BJ (cell line): ENCODE measurements at regions of chr3 and their contacts with region 1.

Region 1: GRCh38 chr3:48400824-48401433 is 28.9 kb downstream of the FBXW12 start:
- DNase-seq: no peak
- H3K4me3 ChIP-seq: no peak overlapping the region
- H3K27me3 ChIP-seq: peaks cover 2% of the 10 kb centered on the region
- CTCF ChIP-seq: peak; percentile 77

Region 2: DNA sequence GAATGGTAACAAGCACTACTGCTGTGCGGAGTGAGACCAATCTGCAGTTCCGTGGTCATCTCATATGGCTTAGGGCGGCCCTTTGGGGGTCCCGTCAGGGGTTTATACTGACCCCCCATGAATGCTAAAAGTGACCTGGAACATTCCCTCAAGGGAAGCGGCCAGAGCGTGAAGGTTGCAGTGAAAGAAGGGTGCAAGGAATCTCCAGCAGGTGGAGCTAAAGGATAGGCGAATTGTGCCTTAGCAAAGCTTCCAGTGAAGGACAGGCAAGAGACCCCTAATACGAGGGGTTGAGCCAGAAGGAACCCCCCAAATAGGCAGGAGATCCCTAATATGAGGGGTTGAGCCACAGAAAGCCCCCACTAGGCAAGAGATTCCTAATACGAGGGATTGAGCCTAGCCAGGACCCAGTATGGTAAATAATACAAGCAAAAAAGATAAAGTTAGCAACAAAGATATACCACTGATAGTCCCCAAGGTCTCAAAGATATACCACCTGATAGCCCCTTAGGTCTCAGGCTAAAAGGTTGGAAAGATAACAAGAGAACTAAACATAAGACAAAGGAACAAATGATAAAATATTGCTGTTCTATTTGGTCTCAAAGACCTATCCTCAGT is 127.2 kb before region 1 on chr3:
- CTCF ChIA-PET with region 1: interaction called, 10 read pairs
- POLR2A ChIA-PET with region 1: no interaction called
- DNase-seq: no peak
- H3K4me3 ChIP-seq: no peak overlapping the region
- H3K27me3 ChIP-seq: no peaks in the 10 kb centered on the region
- CTCF ChIP-seq: peak; percentile 82

Region 3: DNA sequence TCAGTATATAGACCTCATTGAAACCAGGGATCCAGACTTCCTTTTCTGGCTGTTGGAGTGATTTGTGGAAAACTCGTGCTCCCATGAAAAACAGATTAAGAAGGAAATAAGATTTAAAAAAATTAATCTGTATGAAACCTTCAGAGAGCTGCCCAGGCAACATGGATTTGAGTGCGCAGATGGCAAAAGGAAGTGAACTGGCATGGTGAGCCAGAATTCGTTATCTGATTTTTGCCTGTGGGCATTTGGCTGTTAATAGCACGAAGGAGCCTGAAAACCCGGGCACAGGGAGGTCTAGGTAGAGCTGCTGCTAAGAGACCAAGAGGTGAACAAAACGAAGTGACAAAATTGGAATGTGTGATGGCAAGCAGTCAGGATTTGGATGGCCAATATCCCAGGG is 48.4 kb before region 1 on chr3:
- CTCF ChIA-PET with region 1: no interaction called
- POLR2A ChIA-PET with region 1: no interaction called
- DNase-seq: no peak
- H3K4me3 ChIP-seq: no peak overlapping the region
- H3K27me3 ChIP-seq: peaks cover 12% of the 10 kb centered on the region
- CTCF ChIP-seq: no peak

Region 4: GRCh38 chr3:48415554-48415953 is 14.6 kb after region 1 on chr3:
- CTCF ChIA-PET with region 1: interaction called, 10 read pairs
- POLR2A ChIA-PET with region 1: no interaction called
- DNase-seq: no peak
- H3K4me3 ChIP-seq: no peak overlapping the region
- H3K27me3 ChIP-seq: no peaks in the 10 kb centered on the region
- CTCF ChIP-seq: no peak

Region 5: DNA sequence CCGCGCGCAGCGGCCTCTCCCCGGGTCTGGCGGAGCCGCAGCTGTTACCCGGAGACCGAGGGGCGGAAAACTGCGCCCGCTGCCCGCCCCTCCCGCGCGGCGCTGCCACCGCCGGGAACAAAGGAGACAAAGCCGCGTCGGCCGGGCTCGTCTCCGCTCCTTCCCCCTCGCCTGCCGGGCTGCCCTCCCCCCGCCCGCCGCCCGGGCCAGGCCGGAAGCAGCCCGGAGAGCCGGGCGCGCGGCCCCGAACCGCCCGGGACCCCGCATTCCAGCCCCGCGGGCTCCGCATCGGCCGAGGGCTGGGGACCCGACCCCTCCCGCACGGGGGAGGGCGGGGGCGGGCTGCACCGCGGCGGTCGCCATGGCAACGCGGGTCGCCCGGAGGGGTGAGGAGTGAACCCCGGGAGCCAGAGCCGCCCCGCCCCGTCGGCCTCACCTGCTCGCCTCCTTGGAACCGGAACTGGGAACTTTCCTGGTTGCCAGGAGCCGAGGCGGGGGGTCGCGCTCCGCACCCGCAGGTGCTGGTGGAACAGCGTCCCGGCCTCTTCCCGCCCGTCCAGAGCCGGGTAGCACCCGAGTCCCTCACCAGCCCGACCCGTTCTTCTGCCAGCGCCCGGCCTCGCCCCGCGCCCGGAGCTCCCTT is 28.5 kb after region 1 on chr3:
- CTCF ChIA-PET with region 1: interaction called, 252 read pairs
- POLR2A ChIA-PET with region 1: no interaction called
- DNase-seq: no peak
- H3K4me3 ChIP-seq: peak overlapping the region; percentile 72
- H3K27me3 ChIP-seq: no peaks in the 10 kb centered on the region
- CTCF ChIP-seq: no peak

Region 6: DNA sequence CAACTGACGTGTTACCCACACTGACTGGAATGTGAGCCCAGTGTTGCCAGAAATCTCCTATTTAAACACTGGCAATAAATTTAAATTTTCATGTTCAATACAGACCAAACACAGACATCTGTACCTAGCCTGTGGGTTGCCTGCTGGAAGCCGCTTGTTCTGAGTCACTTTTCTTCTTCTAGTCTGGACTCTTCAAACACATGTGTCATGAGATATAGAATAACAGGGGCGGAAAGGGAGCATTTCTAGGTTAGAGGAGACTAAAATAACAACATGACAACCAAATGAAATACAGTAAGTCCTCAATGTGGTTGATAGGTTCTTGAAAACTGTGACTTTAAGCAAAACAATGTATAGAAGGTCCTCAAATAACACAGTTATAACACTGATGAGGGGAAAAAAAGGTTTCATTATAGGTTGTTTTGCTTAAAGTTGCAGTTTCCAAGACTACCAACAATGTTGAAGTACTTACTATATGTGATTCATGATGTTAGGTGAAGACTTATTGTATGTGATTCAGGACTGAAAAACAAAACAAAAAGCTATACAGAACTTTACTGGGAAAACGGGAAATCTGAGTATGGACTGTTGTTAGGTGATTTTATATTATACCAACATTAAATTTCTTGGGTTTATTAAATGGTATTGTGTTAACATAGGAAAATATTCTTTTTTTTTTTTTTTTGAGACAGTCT is 383.6 kb after region 1 on chr3:
- CTCF ChIA-PET with region 1: no interaction called
- POLR2A ChIA-PET with region 1: no interaction called
- DNase-seq: no peak
- H3K4me3 ChIP-seq: no peak overlapping the region
- H3K27me3 ChIP-seq: no peaks in the 10 kb centered on the region
- CTCF ChIP-seq: no peak

Region 7: DNA sequence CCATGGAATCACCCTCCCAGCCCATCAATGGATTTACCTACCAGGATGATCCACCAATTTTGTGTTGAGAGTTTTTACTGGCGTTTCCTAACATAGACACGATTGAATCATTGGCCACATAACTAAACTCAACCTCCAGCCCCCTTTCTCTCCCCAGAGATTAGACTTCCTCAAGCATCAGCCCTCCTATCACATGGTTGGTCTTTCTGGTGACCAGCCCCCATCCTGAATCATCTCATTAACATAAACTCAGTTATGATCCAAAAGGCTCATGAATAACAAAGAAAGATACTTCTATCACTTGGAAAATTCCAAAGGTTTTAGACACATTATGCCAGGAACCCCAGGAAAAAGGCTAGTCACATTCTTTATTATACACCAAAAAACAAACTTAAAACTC is 425.5 kb after region 1 on chr3:
- CTCF ChIA-PET with region 1: no interaction called
- POLR2A ChIA-PET with region 1: no interaction called
- DNase-seq: no peak
- H3K4me3 ChIP-seq: no peak overlapping the region
- H3K27me3 ChIP-seq: no peaks in the 10 kb centered on the region
- CTCF ChIP-seq: no peak